A549 (cell line): ENCODE measurements at regions of chr17 and their contacts with region 1.

Region 1: DNA sequence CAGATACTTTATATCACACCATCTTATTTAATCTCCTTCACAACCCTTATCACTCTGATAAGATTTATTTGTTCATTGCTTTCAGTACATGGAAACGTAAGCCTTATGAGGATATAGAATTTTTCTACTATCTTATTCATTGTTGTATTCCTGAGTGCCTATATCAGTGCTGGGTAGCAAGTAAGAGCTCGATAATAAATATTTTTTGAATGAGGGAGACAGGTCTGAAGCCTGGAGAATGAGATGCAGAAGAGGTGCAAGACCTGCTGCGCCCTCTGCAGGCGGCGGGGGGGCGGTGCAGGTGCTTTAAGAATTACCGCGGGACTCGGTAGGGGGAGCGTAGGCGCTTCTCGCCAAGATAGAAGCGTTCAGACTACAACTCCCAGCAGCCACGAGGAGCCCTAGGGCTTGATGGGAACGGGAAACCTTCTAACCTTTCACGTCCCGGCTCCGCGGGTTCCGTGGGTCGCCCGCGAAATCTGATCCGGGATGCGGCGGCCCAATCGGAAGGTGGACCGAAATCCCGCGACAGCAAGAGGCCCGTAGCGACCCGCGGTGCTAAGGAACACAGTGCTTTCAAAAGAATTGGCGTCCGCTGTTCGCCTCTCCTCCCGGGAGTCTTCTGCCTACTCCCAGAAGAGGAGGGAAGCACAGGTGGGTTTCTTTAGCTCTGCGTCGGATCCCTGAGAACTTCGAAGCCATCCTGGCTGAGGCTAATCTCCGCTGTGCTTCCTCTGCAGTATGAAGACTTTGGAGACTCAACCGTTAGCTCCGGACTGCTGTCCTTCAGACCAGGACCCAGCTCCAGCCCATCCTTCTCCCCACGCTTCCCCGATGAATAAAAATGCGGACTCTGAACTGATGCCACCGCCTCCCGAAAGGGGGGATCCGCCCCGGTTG is at the start of gene WRAP53:
- DNase-seq: peak; percentile 98 to 99
- ATAC-seq: peak; percentile 85 to 91
- H3K4me3 ChIP-seq: peak within 1 kb of the TSS; percentile 77
- H3K27ac ChIP-seq: peak within 1 kb of the TSS; percentile 94 to 95
- H3K4me1 ChIP-seq: peaks cover 23% of the 10 kb centered on the region
- CTCF ChIP-seq: peak; percentile 99
- EP300 ChIP-seq: no peak
- POLR2A ChIP-seq: peak; percentile 66
- RAD21 ChIP-seq: peak; percentile 86
- polyA plus RNA-seq, gene WRAP53: 15.9 and 17.4 TPM in 2 replicates

Region 2: DNA sequence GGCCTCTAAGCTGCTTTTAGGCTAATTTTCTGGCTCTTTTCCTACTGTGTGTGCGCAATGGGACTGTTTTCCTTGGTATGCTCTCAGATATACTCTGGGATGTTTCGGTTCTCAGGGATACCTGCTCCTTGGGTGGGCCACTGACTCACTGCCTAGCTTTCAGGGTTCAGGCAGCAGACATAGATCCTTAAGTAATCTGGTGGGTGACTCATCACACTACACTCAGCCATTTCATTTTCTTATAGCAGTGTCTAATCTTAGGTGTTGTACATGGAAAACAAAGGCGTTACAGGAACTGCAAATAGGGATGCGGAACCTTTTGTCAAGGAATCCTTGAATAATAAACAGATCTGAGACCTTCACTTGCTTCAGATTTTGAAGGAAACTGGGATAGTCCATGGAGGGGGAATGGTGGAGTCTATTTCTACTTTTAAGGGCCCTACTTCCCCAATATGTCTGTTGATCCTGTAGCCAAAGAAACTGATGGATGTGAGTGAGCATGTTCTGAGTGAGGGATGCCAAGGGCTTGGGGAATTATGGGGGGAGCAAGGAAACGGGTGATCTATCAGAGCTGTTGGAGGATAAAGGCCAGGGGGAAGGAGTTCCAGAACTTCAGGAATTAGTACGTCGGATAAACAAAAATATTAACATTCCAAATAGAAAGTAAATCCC is 815.9 kb before region 1 on chr17:
- CTCF ChIA-PET with region 1: no interaction called
- POLR2A ChIA-PET with region 1: no interaction called
- DNase-seq: peak; percentile 90 to 98
- ATAC-seq: peak; percentile 98 to 100
- H3K4me3 ChIP-seq: no peak overlapping the region
- H3K27ac ChIP-seq: peak overlapping the region; percentile 85
- H3K4me1 ChIP-seq: peaks cover 58% of the 10 kb centered on the region
- CTCF ChIP-seq: no peak
- EP300 ChIP-seq: peak; percentile 90; a peak in 3 of 5 replicates
- POLR2A ChIP-seq: no peak
- RAD21 ChIP-seq: peak; percentile 27 to 41; a peak in 2 of 5 replicates

Region 3: DNA sequence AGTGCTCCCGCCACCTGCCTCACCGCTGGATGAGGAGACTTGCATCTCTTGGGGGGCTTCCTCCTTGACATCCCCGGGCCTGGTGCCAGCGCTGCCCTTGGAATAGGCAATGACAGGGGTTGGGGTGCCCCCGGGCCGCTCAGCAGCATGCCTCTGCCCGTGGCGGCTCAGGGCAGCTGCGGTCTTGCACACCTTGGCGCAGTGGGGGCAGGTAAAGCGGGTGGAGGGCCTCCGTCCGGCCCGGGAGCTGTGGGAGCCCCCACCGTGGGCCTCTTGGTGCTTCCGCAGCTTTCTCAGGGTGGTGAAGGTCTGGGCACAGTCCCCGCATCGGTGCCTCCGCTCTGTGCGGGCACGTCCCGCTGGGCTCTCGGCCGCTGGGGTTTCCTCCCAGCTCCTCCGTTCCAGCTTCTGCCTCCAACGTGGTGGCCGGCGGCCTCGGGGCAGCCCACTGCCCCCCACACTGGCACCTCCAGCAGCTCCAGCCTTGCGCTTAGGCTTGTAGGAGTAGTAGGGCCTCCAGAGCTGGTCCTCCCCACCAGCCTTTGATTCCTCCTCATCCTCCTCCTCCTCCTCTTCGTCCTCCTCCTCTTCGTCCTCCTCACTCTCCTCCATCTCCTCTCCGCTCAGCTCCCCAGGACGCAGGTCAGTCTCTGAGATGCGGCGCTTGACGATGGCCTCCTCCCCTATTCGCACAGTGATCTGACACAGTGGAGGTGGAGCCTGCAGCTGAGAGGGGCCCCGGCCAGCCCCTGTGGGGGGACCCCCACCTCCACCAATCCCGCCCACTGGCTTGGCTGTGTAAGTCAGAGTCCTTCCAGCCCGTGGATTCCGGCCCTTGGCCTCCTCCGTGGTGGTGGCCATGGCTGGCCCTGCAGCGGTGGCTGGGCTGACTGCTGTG is 225.4 kb before region 1 on chr17:
- CTCF ChIA-PET with region 1: no interaction called
- POLR2A ChIA-PET with region 1: no interaction called
- DNase-seq: no peak
- ATAC-seq: no peak
- H3K4me3 ChIP-seq: no peak overlapping the region
- H3K27ac ChIP-seq: no peak overlapping the region
- H3K4me1 ChIP-seq: peaks cover 15% of the 10 kb centered on the region
- CTCF ChIP-seq: no peak
- EP300 ChIP-seq: no peak
- POLR2A ChIP-seq: no peak
- RAD21 ChIP-seq: no peak

Region 4: GRCh38 chr17:7515911-7516610 is 172.1 kb before region 1 on chr17:
- CTCF ChIA-PET with region 1: interaction called, 12 read pairs
- POLR2A ChIA-PET with region 1: no interaction called
- DNase-seq: peak in 1 of 2 experiments; percentile 33
- ATAC-seq: no peak
- H3K4me3 ChIP-seq: no peak overlapping the region
- H3K27ac ChIP-seq: no peak overlapping the region
- H3K4me1 ChIP-seq: no peaks in the 10 kb centered on the region
- CTCF ChIP-seq: no peak
- EP300 ChIP-seq: no peak
- POLR2A ChIP-seq: no peak
- RAD21 ChIP-seq: no peak

Region 5: GRCh38 chr17:7589204-7589868 is 98.8 kb before region 1 on chr17:
- CTCF ChIA-PET with region 1: interaction called, 184 read pairs
- POLR2A ChIA-PET with region 1: interaction called, 97 read pairs
- DNase-seq: peak in 1 of 2 experiments; percentile 72
- ATAC-seq: peak; percentile 22 to 65; a peak in 3 of 6 replicates
- H3K4me3 ChIP-seq: no peak overlapping the region
- H3K27ac ChIP-seq: peak overlapping the region in 1 of 2 experiments; percentile 78; a peak in 2 of 6 replicates
- H3K4me1 ChIP-seq: peaks cover 36% of the 10 kb centered on the region
- CTCF ChIP-seq: peak; percentile 46
- EP300 ChIP-seq: no peak
- POLR2A ChIP-seq: no peak
- RAD21 ChIP-seq: peak; percentile 44 to 45; a peak in 3 of 5 replicates

Region 6: DNA sequence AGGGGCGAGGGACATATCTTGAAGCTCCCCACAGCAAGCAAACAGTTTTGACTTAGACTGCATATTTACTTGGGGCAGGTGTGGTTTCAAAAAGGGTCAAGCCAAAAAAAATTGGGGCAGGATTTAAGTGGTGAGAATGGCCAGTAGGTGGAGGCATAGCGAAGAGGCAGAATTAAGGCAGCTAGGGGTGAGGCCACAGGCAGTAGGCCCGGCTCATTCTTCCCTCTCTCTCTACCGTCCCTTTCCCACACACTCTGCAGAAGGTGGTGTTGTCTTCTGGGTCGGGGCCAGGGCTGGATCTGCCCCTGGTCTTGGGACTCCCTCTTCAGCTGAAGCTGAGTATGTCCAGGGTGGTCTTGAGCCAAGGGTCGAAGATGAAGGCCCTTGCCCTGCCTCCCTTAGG is 55.7 kb before region 1 on chr17:
- CTCF ChIA-PET with region 1: interaction called, 191 read pairs
- POLR2A ChIA-PET with region 1: interaction called, 81 read pairs
- DNase-seq: peak; percentile 71 to 79
- ATAC-seq: peak; percentile 57 to 69; a peak in 5 of 6 replicates
- H3K4me3 ChIP-seq: no peak overlapping the region
- H3K27ac ChIP-seq: peak overlapping the region in 1 of 2 experiments; percentile 52; a peak in 2 of 6 replicates
- H3K4me1 ChIP-seq: peaks cover 5% of the 10 kb centered on the region; the same call in 2 of the 3 replicates
- CTCF ChIP-seq: peak; percentile 56; the same call in 2 of the 3 replicates
- EP300 ChIP-seq: no peak
- POLR2A ChIP-seq: no peak
- RAD21 ChIP-seq: peak; percentile 51 to 61

Region 7: GRCh38 chr17:7656958-7657609 is 31.1 kb before region 1 on chr17:
- CTCF ChIA-PET with region 1: interaction called, 22 read pairs
- POLR2A ChIA-PET with region 1: interaction called, 8 read pairs
- DNase-seq: peak in 1 of 2 experiments; percentile 36
- ATAC-seq: peak in 1 of 2 experiments; percentile 15; a peak in 1 of 6 replicates
- H3K4me3 ChIP-seq: no peak overlapping the region
- H3K27ac ChIP-seq: no peak overlapping the region
- H3K4me1 ChIP-seq: no peaks in the 10 kb centered on the region
- CTCF ChIP-seq: no peak
- EP300 ChIP-seq: no peak
- POLR2A ChIP-seq: no peak
- RAD21 ChIP-seq: no peak

Region 8: GRCh38 chr17:7703584-7704479 is 15.7 kb after region 1 on chr17:
- CTCF ChIA-PET with region 1: interaction called, 103 read pairs
- POLR2A ChIA-PET with region 1: interaction called, 11 read pairs
- DNase-seq: peak; percentile 34 to 77
- ATAC-seq: peak in 1 of 2 experiments; percentile 55; a peak in 3 of 6 replicates
- H3K4me3 ChIP-seq: no peak overlapping the region; the same call in 2 of the 3 replicates
- H3K27ac ChIP-seq: no peak overlapping the region
- H3K4me1 ChIP-seq: peaks cover 13% of the 10 kb centered on the region; the same call in 2 of the 3 replicates
- CTCF ChIP-seq: no peak
- EP300 ChIP-seq: no peak
- POLR2A ChIP-seq: no peak
- RAD21 ChIP-seq: no peak

Region 9: GRCh38 chr17:7782237-7782636 is 94.1 kb after region 1 on chr17:
- CTCF ChIA-PET with region 1: interaction called, 10 read pairs
- POLR2A ChIA-PET with region 1: no interaction called
- DNase-seq: peak in 1 of 2 experiments; percentile 20
- ATAC-seq: no peak
- H3K4me3 ChIP-seq: no peak overlapping the region
- H3K27ac ChIP-seq: no peak overlapping the region
- H3K4me1 ChIP-seq: no peaks in the 10 kb centered on the region
- CTCF ChIP-seq: peak; percentile 17; the same call in 1 of the 3 replicates
- EP300 ChIP-seq: no peak
- POLR2A ChIP-seq: no peak
- RAD21 ChIP-seq: peak; percentile 20 to 45; a peak in 2 of 5 replicates